ENCODE measurements at regions of chr1 and their contacts with region 1.

Region 1: GRCh38 chr1:180003026-180003695 is 48.6 kb downstream of the CEP350 start:
- DNase-seq: no peak
- H3K4me3 ChIP-seq: no peak overlapping the region
- H3K4me3 Mint-ChIP-seq: no peak overlapping the region
- H3K27ac ChIP-seq: no peak overlapping the region
- H3K27ac Mint-ChIP-seq: peak overlapping the region in 1 of 7 donors; percentile 19
- H3K4me1 ChIP-seq: no peaks in the 10 kb centered on the region
- H3K4me1 Mint-ChIP-seq: peaks cover 0 to 8% (median 1%) of the 10 kb centered on the region in 4 donors
- H3K27me3 ChIP-seq: no peaks in the 10 kb centered on the region
- H3K27me3 Mint-ChIP-seq: no peaks in the 10 kb centered on the region

Region 2: GRCh38 chr1:179151908-179152682 is 851.1 kb before region 1 on chr1:
- CTCF ChIA-PET with region 1: no interaction called
- POLR2A ChIA-PET with region 1: no interaction called
- intact Hi-C with region 1: no loop called
- DNase-seq: no peak
- H3K4me3 ChIP-seq: no peak overlapping the region
- H3K4me3 Mint-ChIP-seq: no peak overlapping the region
- H3K27ac ChIP-seq: no peak overlapping the region
- H3K27ac Mint-ChIP-seq: peak overlapping the region in 1 of 7 donors; percentile 35
- H3K4me1 ChIP-seq: no peaks in the 10 kb centered on the region
- H3K4me1 Mint-ChIP-seq: peaks cover 8 to 25% (median 10%) of the 10 kb centered on the region in 4 donors
- H3K27me3 ChIP-seq: no peaks in the 10 kb centered on the region
- H3K27me3 Mint-ChIP-seq: no peaks in the 10 kb centered on the region

Region 3: GRCh38 chr1:180027949-180028445 is 24.8 kb after region 1 on chr1:
- CTCF ChIA-PET with region 1: no interaction called
- POLR2A ChIA-PET with region 1: no interaction called
- intact Hi-C with region 1: no loop called
- DNase-seq: no peak
- H3K4me3 ChIP-seq: no peak overlapping the region
- H3K4me3 Mint-ChIP-seq: no peak overlapping the region
- H3K27ac ChIP-seq: no peak overlapping the region
- H3K27ac Mint-ChIP-seq: no peak overlapping the region
- H3K4me1 ChIP-seq: no peaks in the 10 kb centered on the region
- H3K4me1 Mint-ChIP-seq: peaks cover 0 to 11% (median 2%) of the 10 kb centered on the region in 4 donors
- H3K27me3 ChIP-seq: no peaks in the 10 kb centered on the region
- H3K27me3 Mint-ChIP-seq: no peaks in the 10 kb centered on the region

Region 4: GRCh38 chr1:180057883-180058396 is 54.8 kb after region 1 on chr1:
- CTCF ChIA-PET with region 1: no interaction called
- POLR2A ChIA-PET with region 1: no interaction called
- intact Hi-C with region 1: loop called (anchors 10 kb)
- DNase-seq: no peak
- H3K4me3 ChIP-seq: no peak overlapping the region
- H3K4me3 Mint-ChIP-seq: no peak overlapping the region
- H3K27ac ChIP-seq: no peak overlapping the region
- H3K27ac Mint-ChIP-seq: peak overlapping the region in 1 of 7 donors; percentile 22
- H3K4me1 ChIP-seq: no peaks in the 10 kb centered on the region
- H3K4me1 Mint-ChIP-seq: peaks cover 0 to 2% (median 0%) of the 10 kb centered on the region in 4 donors
- H3K27me3 ChIP-seq: no peaks in the 10 kb centered on the region
- H3K27me3 Mint-ChIP-seq: no peaks in the 10 kb centered on the region

Region 5: GRCh38 chr1:180188091-180188506 is 184.9 kb after region 1 on chr1:
- CTCF ChIA-PET with region 1: no interaction called
- POLR2A ChIA-PET with region 1: no interaction called
- intact Hi-C with region 1: no loop called
- DNase-seq: no peak
- H3K4me3 ChIP-seq: no peak overlapping the region
- H3K4me3 Mint-ChIP-seq: no peak overlapping the region
- H3K27ac ChIP-seq: no peak overlapping the region
- H3K27ac Mint-ChIP-seq: no peak overlapping the region
- H3K4me1 ChIP-seq: peaks cover 3% of the 10 kb centered on the region
- H3K4me1 Mint-ChIP-seq: peaks cover 0 to 15% (median 2%) of the 10 kb centered on the region in 4 donors
- H3K27me3 ChIP-seq: no peaks in the 10 kb centered on the region
- H3K27me3 Mint-ChIP-seq: no peaks in the 10 kb centered on the region